ENCODE measurements at regions of chr17 and their contacts with region 1.

Region 1: GRCh38 chr17:7045909-7046724 is 2.2 kb upstream of the SLC16A11 start:
- DNase-seq: peak; percentile 53
- ATAC-seq: peak; percentile 62
- H3K4me3 ChIP-seq: peak overlapping the region; percentile 58
- H3K27ac ChIP-seq: peak overlapping the region; percentile 5; the same call in 1 of the 2 replicates
- H3K4me1 ChIP-seq: peaks cover 17% of the 10 kb centered on the region
- H3K27me3 ChIP-seq: peaks cover 0 to 2% of the 10 kb centered on the region in 2 experiments; a peak in 2 of 4 replicates
- CTCF ChIP-seq: peak; percentile 58 to 87 (median 65)
- EP300 ChIP-seq: no peak
- POLR2A ChIP-seq: no peak
- RAD21 ChIP-seq: peak; percentile 95

Region 2: DNA sequence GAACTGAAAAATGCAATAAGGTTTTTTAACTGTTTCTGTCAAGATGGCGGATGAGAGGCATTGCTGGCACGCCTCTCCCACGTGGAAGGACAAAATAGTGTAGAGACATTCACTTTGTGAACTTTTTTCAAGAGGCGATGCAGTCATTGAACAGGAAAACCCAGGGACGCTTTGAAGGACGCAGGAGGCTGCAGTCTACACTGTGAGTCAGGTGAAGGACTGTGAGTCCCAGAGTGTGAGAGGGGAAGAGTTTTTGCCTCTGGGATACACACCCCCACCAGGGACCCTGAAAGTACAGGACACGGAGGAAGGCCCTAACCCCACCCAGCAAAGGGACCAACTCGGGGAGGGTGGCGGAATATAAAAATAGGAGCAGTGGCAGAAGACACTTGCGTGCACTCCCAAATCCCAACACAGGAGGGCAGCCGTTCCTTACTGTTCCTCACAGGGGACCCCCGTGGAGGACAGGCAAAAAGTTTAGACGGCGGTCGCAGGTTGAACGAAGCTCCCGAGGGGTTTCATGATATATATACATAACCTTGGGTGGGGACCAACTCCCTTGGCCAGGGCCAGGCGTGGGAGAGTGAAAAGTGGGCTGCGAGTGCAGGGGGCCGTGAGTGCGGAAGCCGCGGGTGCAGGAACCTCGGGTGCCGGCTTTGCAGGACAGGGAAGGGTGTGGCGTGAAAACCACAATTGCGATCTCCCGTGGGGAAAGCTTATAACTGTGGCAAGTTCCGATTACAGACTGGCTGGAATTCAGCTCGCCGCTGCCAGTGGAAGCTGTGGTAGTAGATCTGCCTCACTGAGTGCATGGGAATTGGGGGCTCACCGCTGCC is 132.3 kb before region 1 on chr17:
- CTCF ChIA-PET with region 1: interaction called, 18 read pairs
- POLR2A ChIA-PET with region 1: interaction called, 4 read pairs
- RAD21 ChIA-PET with region 1: interaction called, 5 read pairs
- SMC1A ChIA-PET with region 1: interaction called, 6 read pairs
- in situ Hi-C with region 1: no loop called
- intact Hi-C with region 1: no loop called
- DNase-seq: no peak
- ATAC-seq: peak; percentile 92
- H3K4me3 ChIP-seq: no peak overlapping the region
- H3K27ac ChIP-seq: no peak overlapping the region
- H3K4me1 ChIP-seq: peaks cover 4% of the 10 kb centered on the region; the same call in 1 of the 2 replicates
- H3K27me3 ChIP-seq: no peaks in the 10 kb centered on the region
- CTCF ChIP-seq: peak; percentile 74 to 90 (median 87)
- EP300 ChIP-seq: no peak
- POLR2A ChIP-seq: no peak
- RAD21 ChIP-seq: peak; percentile 91

Region 3: DNA sequence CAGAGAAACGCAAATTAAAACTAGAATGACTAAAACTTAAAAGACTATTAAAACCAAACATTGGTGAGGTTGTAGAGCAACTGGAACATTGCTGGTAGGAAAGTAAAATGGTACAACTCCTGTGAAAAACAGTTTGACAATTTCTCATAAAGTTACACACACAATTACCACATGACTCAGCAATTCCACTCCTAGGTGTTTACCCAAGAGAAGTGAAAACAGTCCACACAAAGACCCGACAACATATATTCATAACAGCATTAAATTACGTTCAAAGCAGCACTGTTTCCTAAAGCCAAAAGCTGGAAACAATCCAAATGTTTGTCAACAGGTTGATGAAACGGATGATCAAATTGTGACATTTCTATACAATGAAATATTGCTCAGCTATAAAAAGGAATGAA is 76.8 kb before region 1 on chr17:
- CTCF ChIA-PET with region 1: no interaction called
- POLR2A ChIA-PET with region 1: no interaction called
- RAD21 ChIA-PET with region 1: no interaction called
- SMC1A ChIA-PET with region 1: no interaction called
- in situ Hi-C with region 1: no loop called
- intact Hi-C with region 1: no loop called
- DNase-seq: no peak
- ATAC-seq: no peak
- H3K4me3 ChIP-seq: no peak overlapping the region
- H3K27ac ChIP-seq: no peak overlapping the region
- H3K4me1 ChIP-seq: no peaks in the 10 kb centered on the region
- H3K27me3 ChIP-seq: no peaks in the 10 kb centered on the region
- CTCF ChIP-seq: no peak
- EP300 ChIP-seq: no peak
- POLR2A ChIP-seq: no peak
- RAD21 ChIP-seq: no peak

Region 4: GRCh38 chr17:7035591-7036368 is 10.3 kb before region 1 on chr17 and contains the start of gene SLC16A13:
- CTCF ChIA-PET with region 1: interaction called, 36 read pairs
- POLR2A ChIA-PET with region 1: interaction called, 11 read pairs
- RAD21 ChIA-PET with region 1: interaction called, 18 read pairs
- SMC1A ChIA-PET with region 1: interaction called, 8 read pairs
- in situ Hi-C with region 1: no loop called
- intact Hi-C with region 1: no loop called
- DNase-seq: peak; percentile 96
- ATAC-seq: peak; percentile 96
- H3K4me3 ChIP-seq: peak within 1 kb of the TSS; percentile 77
- H3K27ac ChIP-seq: peak within 1 kb of the TSS; percentile 99
- H3K4me1 ChIP-seq: peaks cover 10% of the 10 kb centered on the region
- H3K27me3 ChIP-seq: no peaks in the 10 kb centered on the region
- CTCF ChIP-seq: no peak
- EP300 ChIP-seq: peak in 1 of 2 experiments; percentile 27; a peak in 1 of 4 replicates
- POLR2A ChIP-seq: peak; percentile 95
- RAD21 ChIP-seq: no peak
- polyA plus RNA-seq, gene SLC16A13: 0.34 to 0.46 TPM

Region 5: DNA sequence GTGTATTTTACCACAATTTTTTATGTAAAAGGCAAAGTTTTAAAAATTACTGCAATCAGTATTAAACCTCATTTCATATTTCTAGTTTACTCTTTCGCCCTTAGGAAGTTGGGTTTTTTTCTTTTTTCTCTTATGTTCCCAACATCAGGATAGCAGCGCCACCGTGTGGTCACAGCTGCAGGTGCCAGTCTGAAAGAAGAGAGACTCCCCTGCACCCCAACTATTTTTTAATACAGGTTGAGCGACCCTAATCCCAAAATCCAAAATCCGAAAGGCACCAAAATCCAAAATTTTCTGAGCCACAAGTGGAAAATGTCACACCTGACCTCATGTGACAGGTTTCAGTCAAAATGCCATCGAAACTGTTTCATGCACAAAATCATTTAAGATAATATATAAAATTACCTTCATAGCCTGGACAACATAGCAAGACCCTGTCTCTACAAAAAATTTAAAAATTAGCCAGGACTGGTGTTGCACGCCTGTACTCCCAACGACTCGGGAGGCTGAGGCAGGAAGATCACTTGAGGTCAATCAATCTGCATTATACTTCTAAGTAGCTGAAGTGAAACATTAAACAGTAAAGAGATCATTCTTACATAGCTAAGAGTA is 90.3 kb after region 1 on chr17:
- CTCF ChIA-PET with region 1: interaction called, 590 read pairs
- POLR2A ChIA-PET with region 1: interaction called, 35 read pairs
- RAD21 ChIA-PET with region 1: interaction called, 269 read pairs
- SMC1A ChIA-PET with region 1: interaction called, 356 read pairs
- in situ Hi-C with region 1: loop called (anchors 5 kb)
- intact Hi-C with region 1: loop called (anchors 1 kb)
- DNase-seq: peak; percentile 33
- ATAC-seq: no peak
- H3K4me3 ChIP-seq: no peak overlapping the region
- H3K27ac ChIP-seq: no peak overlapping the region
- H3K4me1 ChIP-seq: peaks cover 18% of the 10 kb centered on the region
- H3K27me3 ChIP-seq: peaks cover 0 to 3% of the 10 kb centered on the region in 2 experiments; a peak in 1 of 4 replicates
- CTCF ChIP-seq: peak; percentile 83 to 91 (median 89)
- EP300 ChIP-seq: no peak
- POLR2A ChIP-seq: no peak
- RAD21 ChIP-seq: peak; percentile 98

Region 6: GRCh38 chr17:7177196-7177953 is 131.3 kb after region 1 on chr17:
- CTCF ChIA-PET with region 1: interaction called, 34 read pairs
- POLR2A ChIA-PET with region 1: no interaction called
- RAD21 ChIA-PET with region 1: interaction called, 14 read pairs
- SMC1A ChIA-PET with region 1: interaction called, 14 read pairs
- in situ Hi-C with region 1: no loop called
- intact Hi-C with region 1: loop called (anchors 2 kb)
- DNase-seq: no peak
- ATAC-seq: peak; percentile 95
- H3K4me3 ChIP-seq: no peak overlapping the region
- H3K27ac ChIP-seq: no peak overlapping the region
- H3K4me1 ChIP-seq: peaks cover 6% of the 10 kb centered on the region
- H3K27me3 ChIP-seq: peaks cover 2 to 6% of the 10 kb centered on the region in 2 experiments; a peak in 3 of 4 replicates
- CTCF ChIP-seq: peak; percentile 87 to 89 (median 87)
- EP300 ChIP-seq: no peak
- POLR2A ChIP-seq: no peak
- RAD21 ChIP-seq: peak; percentile 60

Region 7: GRCh38 chr17:7219812-7220581 is 173.9 kb after region 1 on chr17 and contains the starts of genes ACADVL and DLG4:
- CTCF ChIA-PET with region 1: interaction called, 17 read pairs
- POLR2A ChIA-PET with region 1: no interaction called
- RAD21 ChIA-PET with region 1: interaction called, 6 read pairs
- SMC1A ChIA-PET with region 1: interaction called, 7 read pairs
- in situ Hi-C with region 1: no loop called
- intact Hi-C with region 1: no loop called
- DNase-seq: no peak
- ATAC-seq: peak; percentile 86
- H3K4me3 ChIP-seq: peak within 1 kb of the TSS; percentile 81
- H3K27ac ChIP-seq: peak within 1 kb of the TSS; percentile 92
- H3K4me1 ChIP-seq: peaks cover 12% of the 10 kb centered on the region
- H3K27me3 ChIP-seq: no peaks in the 10 kb centered on the region
- CTCF ChIP-seq: no peak
- EP300 ChIP-seq: no peak
- POLR2A ChIP-seq: peak; percentile 88
- RAD21 ChIP-seq: no peak
- polyA plus RNA-seq, gene ACADVL: 25.4 to 73.1 TPM
- polyA plus RNA-seq, gene DLG4: 0.07 to 0.43 TPM

Region 8: GRCh38 chr17:7248796-7249195 is 202.7 kb after region 1 on chr17:
- CTCF ChIA-PET with region 1: no interaction called
- POLR2A ChIA-PET with region 1: no interaction called
- RAD21 ChIA-PET with region 1: no interaction called
- SMC1A ChIA-PET with region 1: no interaction called
- in situ Hi-C with region 1: no loop called
- intact Hi-C with region 1: no loop called
- DNase-seq: no peak
- ATAC-seq: no peak
- H3K4me3 ChIP-seq: peak overlapping the region; percentile 90
- H3K27ac ChIP-seq: peak overlapping the region; percentile 87
- H3K4me1 ChIP-seq: peaks cover 10% of the 10 kb centered on the region
- H3K27me3 ChIP-seq: no peaks in the 10 kb centered on the region
- CTCF ChIP-seq: no peak
- EP300 ChIP-seq: no peak
- POLR2A ChIP-seq: no peak
- RAD21 ChIP-seq: no peak

Region 9: GRCh38 chr17:7336240-7337175 is 290.4 kb after region 1 on chr17 and contains the start of gene ACAP1:
- CTCF ChIA-PET with region 1: interaction called, 10 read pairs
- POLR2A ChIA-PET with region 1: interaction called, 3 read pairs
- RAD21 ChIA-PET with region 1: interaction called, 4 read pairs
- SMC1A ChIA-PET with region 1: interaction called, 5 read pairs
- in situ Hi-C with region 1: no loop called
- intact Hi-C with region 1: no loop called
- DNase-seq: no peak
- ATAC-seq: peak; percentile 93
- H3K4me3 ChIP-seq: peak within 1 kb of the TSS; percentile 96
- H3K27ac ChIP-seq: peak within 1 kb of the TSS; percentile 99
- H3K4me1 ChIP-seq: peaks cover 27% of the 10 kb centered on the region
- H3K27me3 ChIP-seq: no peaks in the 10 kb centered on the region
- CTCF ChIP-seq: 0 out of 6 replicates have a peak, but pooled peaks of 1 of the 3 experiments have one; percentile 11
- EP300 ChIP-seq: peak in 1 of 2 experiments; percentile 13; a peak in 1 of 4 replicates
- POLR2A ChIP-seq: peak; percentile 45
- RAD21 ChIP-seq: no peak
- polyA plus RNA-seq, gene ACAP1: 5.7 to 25.2 TPM

Region 10: DNA sequence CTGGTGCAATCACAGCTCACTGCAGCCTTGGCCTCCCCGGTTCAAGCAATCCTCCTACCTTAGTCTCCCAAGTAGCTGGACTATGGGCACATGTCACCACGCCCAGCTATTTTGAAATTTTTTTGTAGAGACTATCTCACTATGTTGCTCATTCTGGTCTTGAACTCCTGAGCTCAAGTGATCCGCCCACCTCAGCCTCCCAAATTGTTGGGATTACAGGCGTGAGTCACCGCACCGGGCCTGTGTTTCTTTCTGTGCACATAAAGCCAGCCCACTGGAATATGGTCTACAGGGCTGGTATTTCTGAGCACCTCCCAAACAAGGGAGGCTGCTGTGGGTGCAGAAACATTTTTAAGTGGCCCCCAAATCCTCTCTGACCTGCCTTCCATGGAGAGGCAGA is 317.2 kb after region 1 on chr17:
- CTCF ChIA-PET with region 1: no interaction called
- POLR2A ChIA-PET with region 1: no interaction called
- RAD21 ChIA-PET with region 1: no interaction called
- SMC1A ChIA-PET with region 1: no interaction called
- in situ Hi-C with region 1: no loop called
- intact Hi-C with region 1: no loop called
- DNase-seq: no peak
- ATAC-seq: no peak
- H3K4me3 ChIP-seq: no peak overlapping the region
- H3K27ac ChIP-seq: no peak overlapping the region
- H3K4me1 ChIP-seq: no peaks in the 10 kb centered on the region
- H3K27me3 ChIP-seq: no peaks in the 10 kb centered on the region
- CTCF ChIP-seq: no peak
- EP300 ChIP-seq: no peak
- POLR2A ChIP-seq: no peak
- RAD21 ChIP-seq: no peak

Measured in GM12878 (cell line).